Tibial artery (tissue), 4 donors: ENCODE measurements at regions of chr6 and their contacts with region 1.

Region 1: DNA sequence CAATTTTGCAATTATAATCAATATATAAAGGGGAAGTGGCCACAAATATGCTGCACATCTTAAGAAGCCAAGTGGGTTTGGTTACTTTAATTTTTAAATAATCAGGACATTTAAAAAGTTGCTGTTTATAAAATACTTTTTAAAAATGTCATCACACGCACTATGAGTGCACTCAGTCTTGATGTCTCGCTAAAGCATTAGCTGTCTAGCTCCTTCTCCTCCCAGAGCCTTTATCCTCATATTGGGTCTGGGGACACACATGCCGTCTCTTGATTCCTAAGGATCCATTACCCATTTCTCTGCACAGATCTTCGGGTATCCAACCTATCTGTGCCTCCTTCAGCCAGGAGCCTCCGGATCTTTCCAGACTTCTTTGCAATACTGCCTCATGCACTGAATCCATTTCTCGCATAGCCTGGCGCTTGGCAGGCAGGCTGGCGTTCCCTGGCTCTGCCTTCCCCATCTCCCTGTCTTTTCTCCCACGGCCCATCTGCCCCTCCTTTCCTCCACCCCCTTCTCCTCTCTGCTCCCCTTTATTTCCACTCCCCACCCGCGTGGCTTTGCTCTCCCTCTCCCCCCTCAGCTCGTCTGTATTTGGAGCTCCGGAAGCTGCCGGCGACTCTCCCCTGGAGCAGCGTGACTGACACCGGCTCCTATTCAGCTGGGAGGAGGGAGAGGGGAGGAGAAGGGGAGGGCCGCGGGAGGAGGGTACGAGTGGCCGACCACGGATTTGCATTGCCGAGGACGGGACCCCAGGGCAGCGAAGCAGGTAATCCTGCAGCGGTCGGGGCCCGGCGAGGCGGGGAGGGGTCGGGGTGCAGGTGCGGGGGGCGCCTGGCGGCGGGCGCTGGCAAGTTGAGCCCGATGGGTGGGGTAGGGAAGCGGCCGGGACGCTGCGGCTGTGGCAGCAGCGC is at the start of gene CAP2:
- DNase-seq: peak; percentile 51 to 89
- H3K4me3 ChIP-seq: peak within 1 kb of the TSS; percentile 71 to 93
- H3K27ac ChIP-seq: peak within 1 kb of the TSS; percentile 84 to 90
- H3K4me1 ChIP-seq: peaks cover 0 to 30% (median 3%) of the 10 kb centered on the region in 4 donors
- H3K27me3 ChIP-seq: no peaks in the 10 kb centered on the region
- CTCF ChIP-seq: no peak

Region 2: DNA sequence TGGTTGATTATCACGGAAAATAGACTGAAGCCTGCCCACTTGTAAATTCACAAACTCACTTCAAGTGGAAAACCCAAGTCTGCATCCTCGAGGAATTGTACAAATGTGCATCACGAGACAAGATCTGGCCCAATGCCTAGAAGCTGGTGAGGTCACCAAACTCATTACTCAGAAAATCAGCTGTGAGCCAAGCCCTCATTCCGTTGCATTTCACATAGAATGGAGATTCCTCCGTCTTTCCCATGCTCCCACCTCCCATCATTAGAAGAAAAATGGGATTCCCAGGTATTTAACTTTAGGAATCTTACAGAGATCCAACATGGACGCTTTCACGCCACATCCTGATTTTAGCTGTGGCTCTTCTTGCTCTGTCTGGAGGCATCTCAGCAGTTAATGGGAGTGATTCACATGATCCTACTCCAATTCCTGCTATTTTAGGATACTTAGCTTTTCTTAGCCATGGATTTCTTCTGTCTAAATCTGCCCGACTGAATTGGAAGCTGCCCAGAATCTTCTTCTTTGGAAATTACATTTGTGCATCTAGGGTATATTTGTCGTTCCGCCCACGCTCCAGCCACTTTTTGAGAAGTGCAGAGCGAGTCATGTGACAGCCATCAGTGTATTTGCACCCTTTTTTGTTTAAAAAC is 360.1 kb before region 1 on chr6:
- intact Hi-C with region 1: loop called (anchors 5 kb)
- DNase-seq: peak; percentile 87 to 90
- H3K4me3 ChIP-seq: peak overlapping the region; percentile 32 to 47
- H3K27ac ChIP-seq: peak overlapping the region; percentile 76
- H3K4me1 ChIP-seq: peaks cover 0 to 22% (median 16%) of the 10 kb centered on the region in 4 donors
- H3K27me3 ChIP-seq: no peaks in the 10 kb centered on the region
- CTCF ChIP-seq: no peak

Region 3: DNA sequence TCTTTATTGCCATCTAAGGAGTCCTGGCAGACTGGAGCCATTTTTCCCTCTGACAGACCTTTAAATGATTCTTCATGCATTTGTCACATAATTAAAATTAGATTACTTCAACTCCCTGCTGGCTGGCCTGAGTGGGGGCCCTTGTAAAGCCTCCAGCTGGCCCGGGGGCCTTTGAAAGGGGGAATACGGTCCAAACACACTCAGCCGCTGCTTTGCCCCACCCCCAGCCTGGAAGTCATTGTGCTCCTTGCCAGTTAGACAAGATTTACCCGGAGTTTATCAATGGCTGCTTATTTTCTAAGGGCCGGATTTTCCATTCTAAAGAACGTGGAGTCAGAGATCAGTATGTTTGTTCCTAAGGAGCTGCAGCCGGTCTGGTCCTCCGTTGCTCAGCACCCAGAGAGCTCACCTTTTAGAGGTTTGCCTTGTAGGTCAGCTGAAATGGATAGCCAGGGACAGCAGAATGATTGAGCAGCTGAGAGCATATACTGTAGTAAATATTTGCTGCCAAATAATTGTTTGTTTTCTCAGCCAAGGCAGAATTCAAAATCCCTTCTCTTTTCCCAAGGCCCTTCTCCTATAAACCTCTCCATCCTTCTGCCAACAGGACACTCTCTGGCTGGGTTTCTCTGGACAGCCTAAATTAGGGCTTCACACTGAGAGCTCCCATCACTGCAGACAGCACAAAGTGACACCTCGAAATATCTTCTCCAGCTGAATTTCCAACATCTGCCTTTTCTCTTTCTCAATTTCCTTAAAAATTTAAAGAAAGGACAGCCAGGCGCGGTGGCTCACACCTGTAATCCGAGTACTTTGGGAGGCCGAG is 180.5 kb before region 1 on chr6:
- intact Hi-C with region 1: no loop called
- DNase-seq: no peak
- H3K4me3 ChIP-seq: peak overlapping the region; percentile 9 to 17
- H3K27ac ChIP-seq: peak overlapping the region; percentile 29 to 44
- H3K4me1 ChIP-seq: peaks cover 0 to 20% (median 0%) of the 10 kb centered on the region in 4 donors
- H3K27me3 ChIP-seq: no peaks in the 10 kb centered on the region
- CTCF ChIP-seq: no peak

Region 4: GRCh38 chr6:17281100-17281494 is 112.1 kb before region 1 on chr6 and contains the start of gene RBM24:
- intact Hi-C with region 1: loop called (anchors 5 kb)
- DNase-seq: peak; percentile 64 to 82
- H3K4me3 ChIP-seq: peak within 1 kb of the TSS; percentile 82 to 94
- H3K27ac ChIP-seq: peak within 1 kb of the TSS; percentile 84 to 92
- H3K4me1 ChIP-seq: peaks cover 0 to 39% (median 2%) of the 10 kb centered on the region in 4 donors
- H3K27me3 ChIP-seq: no peaks in the 10 kb centered on the region
- CTCF ChIP-seq: peak in 1 of 2 experiments; percentile 52